ENCODE measurements at regions of chr12 and their contacts with region 1.

Region 1: DNA sequence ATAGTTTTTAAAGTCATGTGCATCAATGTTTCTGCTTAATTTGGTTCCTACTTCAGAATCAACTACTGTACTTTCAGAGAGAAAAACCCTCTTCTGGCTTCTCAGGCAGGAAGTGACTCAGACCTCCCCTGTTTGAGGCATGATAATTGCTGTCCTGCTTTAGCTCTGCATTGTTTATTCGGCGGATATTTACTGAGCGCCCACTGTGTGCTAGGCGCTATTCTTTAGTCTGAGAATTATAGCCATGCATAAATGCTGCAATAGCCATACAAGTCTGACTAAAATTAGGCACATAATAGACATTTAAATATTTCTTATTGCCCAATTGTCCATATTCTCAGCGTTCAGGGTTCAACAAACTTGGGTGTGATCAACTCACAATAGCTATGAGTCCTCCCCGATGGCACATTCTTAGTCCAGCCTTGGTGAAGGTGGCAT is 6.1 kb upstream of the AMIGO2 start:
- DNase-seq: peak; percentile 38
- H3K4me3 Mint-ChIP-seq: no peak overlapping the region
- H3K27ac Mint-ChIP-seq: peak overlapping the region; percentile 53
- H3K4me1 Mint-ChIP-seq: peaks cover 53% of the 10 kb centered on the region
- H3K27me3 Mint-ChIP-seq: no peaks in the 10 kb centered on the region

Region 2: GRCh38 chr12:47111392-47111778 is 25.6 kb after region 1 on chr12:
- intact Hi-C with region 1: loop called (anchors 1 kb)
- DNase-seq: no peak
- H3K4me3 Mint-ChIP-seq: no peak overlapping the region
- H3K27ac Mint-ChIP-seq: peak overlapping the region; percentile 83
- H3K4me1 Mint-ChIP-seq: peaks cover 26% of the 10 kb centered on the region
- H3K27me3 Mint-ChIP-seq: no peaks in the 10 kb centered on the region

Region 3: DNA sequence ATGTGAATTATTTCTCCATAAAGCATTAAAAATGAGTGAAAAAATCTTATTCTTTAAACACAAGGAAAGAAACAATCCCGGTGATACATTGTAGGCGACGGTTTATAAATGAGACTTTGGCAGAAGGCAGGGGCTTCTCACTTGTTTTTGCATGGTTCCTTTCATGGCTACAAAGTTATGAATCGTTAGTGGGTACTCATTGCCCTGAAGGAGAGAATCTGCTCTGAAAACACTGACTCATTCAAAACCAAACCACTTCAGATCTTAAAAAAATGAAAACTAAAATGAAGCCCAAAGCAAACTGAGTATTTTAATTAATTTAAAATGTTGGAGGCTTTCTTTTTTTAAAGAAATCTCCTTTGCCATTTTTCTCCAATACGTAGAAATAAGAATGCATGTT is 35.3 kb after region 1 on chr12:
- intact Hi-C with region 1: loop called (anchors 2 kb)
- DNase-seq: no peak
- H3K4me3 Mint-ChIP-seq: no peak overlapping the region
- H3K27ac Mint-ChIP-seq: peak overlapping the region; percentile 46
- H3K4me1 Mint-ChIP-seq: peaks cover 10% of the 10 kb centered on the region
- H3K27me3 Mint-ChIP-seq: no peaks in the 10 kb centered on the region